Caco-2 (cell line): ENCODE measurements at regions of chr6 and their contacts with region 1.

Region 1: GRCh38 chr6:169789982-169790927 is 38.8 kb downstream of the ERMARD start:
- DNase-seq: peak; percentile 85 to 88
- H3K4me3 ChIP-seq: peak overlapping the region; percentile 53
- H3K4me3 Mint-ChIP-seq: peak overlapping the region; percentile 87
- H3K27ac Mint-ChIP-seq: peak overlapping the region; percentile 82
- H3K4me1 ChIP-seq: peaks cover 24% of the 10 kb centered on the region
- H3K4me1 Mint-ChIP-seq: peaks cover 49% of the 10 kb centered on the region
- H3K27me3 ChIP-seq: no peaks in the 10 kb centered on the region
- H3K27me3 Mint-ChIP-seq: no peaks in the 10 kb centered on the region
- CTCF ChIP-seq: peak; percentile 96 to 97

Region 2: GRCh38 chr6:169800668-169801395 is 10.6 kb after region 1 on chr6:
- CTCF ChIA-PET with region 1: interaction called, 32 read pairs
- POLR2A ChIA-PET with region 1: interaction called, 28 read pairs
- intact Hi-C with region 1: loop called (anchors 1 kb)
- DNase-seq: peak; percentile 92 to 97
- H3K4me3 ChIP-seq: no peak overlapping the region
- H3K4me3 Mint-ChIP-seq: peak overlapping the region; percentile 75
- H3K27ac Mint-ChIP-seq: peak overlapping the region; percentile 93
- H3K4me1 ChIP-seq: peaks cover 81% of the 10 kb centered on the region
- H3K4me1 Mint-ChIP-seq: peaks cover 49% of the 10 kb centered on the region
- H3K27me3 ChIP-seq: no peaks in the 10 kb centered on the region
- H3K27me3 Mint-ChIP-seq: no peaks in the 10 kb centered on the region
- CTCF ChIP-seq: no peak

Region 3: GRCh38 chr6:169831450-169832246 is 41.4 kb after region 1 on chr6:
- CTCF ChIA-PET with region 1: interaction called, 17 read pairs
- POLR2A ChIA-PET with region 1: no interaction called
- intact Hi-C with region 1: loop called (anchors 1 kb)
- DNase-seq: peak; percentile 70 to 82
- H3K4me3 ChIP-seq: no peak overlapping the region
- H3K4me3 Mint-ChIP-seq: peak overlapping the region; percentile 27
- H3K27ac Mint-ChIP-seq: peak overlapping the region; percentile 48
- H3K4me1 ChIP-seq: peaks cover 35% of the 10 kb centered on the region
- H3K4me1 Mint-ChIP-seq: peaks cover 41% of the 10 kb centered on the region
- H3K27me3 ChIP-seq: no peaks in the 10 kb centered on the region
- H3K27me3 Mint-ChIP-seq: no peaks in the 10 kb centered on the region
- CTCF ChIP-seq: peak; percentile 74 to 83

Region 4: DNA sequence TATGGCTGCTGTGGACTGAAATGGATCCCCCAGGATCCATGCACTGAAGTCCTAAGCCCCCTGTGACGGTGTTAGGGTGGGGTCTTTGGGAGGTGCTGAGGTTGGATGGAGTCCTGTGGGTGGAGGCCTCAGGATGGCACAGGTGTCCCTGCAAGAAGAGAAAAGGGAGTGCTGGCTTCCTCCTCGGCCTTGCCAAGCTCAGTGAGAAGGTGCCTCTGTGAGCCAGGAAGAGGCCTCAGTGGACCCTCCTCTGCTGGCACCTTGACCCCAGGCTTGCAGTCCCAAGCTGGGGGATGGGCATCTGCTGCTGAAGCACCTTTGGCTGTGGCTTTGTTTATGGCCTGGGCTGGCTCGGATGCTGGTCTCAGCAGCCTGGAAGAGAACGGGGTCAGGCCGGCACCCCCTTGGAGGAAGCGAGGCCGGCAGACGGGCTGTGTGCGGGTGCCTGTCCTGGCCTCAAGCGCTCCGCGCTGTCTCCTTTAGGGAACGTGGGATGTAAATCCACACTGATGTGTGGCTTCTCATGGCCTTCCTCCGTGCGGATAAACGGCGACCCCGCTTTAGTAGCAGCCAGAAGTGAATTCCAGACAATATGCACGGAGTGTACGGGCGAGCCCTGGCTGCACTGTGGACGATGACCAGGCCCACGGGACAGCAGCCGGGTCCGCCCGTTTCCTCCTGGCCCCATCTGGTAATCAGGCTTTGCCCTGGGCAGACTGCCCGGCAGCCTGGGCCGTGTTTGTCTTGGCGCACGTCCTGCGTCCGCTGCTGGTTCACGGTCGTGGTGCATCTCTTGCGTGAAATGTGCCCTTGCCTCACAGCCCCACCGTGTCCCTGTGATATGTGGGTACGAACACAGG is 143.8 kb after region 1 on chr6:
- CTCF ChIA-PET with region 1: no interaction called
- POLR2A ChIA-PET with region 1: no interaction called
- intact Hi-C with region 1: loop called (anchors 5 kb)
- DNase-seq: no peak
- H3K4me3 ChIP-seq: no peak overlapping the region
- H3K4me3 Mint-ChIP-seq: no peak overlapping the region
- H3K27ac Mint-ChIP-seq: peak overlapping the region; percentile 79
- H3K4me1 ChIP-seq: peaks cover 24% of the 10 kb centered on the region
- H3K4me1 Mint-ChIP-seq: peaks cover 7% of the 10 kb centered on the region
- H3K27me3 ChIP-seq: no peaks in the 10 kb centered on the region
- H3K27me3 Mint-ChIP-seq: no peaks in the 10 kb centered on the region
- CTCF ChIP-seq: no peak

Region 5: DNA sequence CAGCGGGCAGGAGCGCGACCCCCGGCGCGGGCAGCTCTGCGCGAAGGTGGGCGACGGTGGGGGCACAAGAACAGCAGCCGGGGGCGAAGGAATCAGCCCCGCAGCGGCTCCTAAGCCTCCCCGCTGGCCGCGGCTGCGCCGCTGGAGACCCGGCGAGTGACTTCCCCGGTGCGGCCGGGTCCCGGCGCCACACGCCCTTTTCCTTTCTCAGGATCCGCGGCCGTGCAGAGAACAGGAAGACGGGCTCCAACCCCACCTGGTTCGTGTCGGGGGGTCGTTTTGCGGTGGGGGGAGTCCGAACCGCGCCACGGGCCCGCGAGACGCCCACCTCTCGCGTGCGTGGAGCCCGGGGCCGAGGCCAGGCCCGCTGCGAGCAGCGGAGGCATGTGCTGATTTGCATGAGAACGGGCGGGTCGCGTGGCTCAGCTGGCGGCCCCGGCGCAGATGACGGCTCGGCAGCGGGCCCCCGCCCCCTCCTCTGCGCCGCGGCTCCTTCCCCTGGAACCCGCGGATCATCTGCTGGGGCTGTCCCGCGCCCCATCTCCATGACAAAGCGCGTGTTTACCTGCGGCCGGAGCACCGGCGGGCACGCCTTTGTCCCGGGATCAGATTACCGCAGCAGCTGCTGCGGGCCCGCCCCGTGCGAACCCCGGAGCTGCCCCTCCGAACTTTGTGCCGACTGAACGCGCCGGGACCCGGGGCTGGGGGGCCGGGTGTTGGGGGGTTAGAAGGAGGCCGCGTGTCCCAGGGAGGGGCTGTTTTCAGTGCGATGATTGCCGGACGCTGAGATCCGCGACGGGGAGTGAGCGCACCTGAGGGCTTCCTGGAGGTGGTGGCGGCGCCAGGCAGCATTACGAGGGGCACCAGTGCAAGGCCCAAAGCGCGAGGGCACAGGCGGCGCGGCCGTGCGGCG is 505.5 kb after region 1 on chr6:
- CTCF ChIA-PET with region 1: interaction called, 9 read pairs
- POLR2A ChIA-PET with region 1: no interaction called
- intact Hi-C with region 1: loop called (anchors 1 kb)
- DNase-seq: peak in 1 of 2 experiments; percentile 53
- H3K4me3 ChIP-seq: peak overlapping the region; percentile 64
- H3K4me3 Mint-ChIP-seq: peak overlapping the region; percentile 78
- H3K27ac Mint-ChIP-seq: no peak overlapping the region
- H3K4me1 ChIP-seq: peaks cover 18% of the 10 kb centered on the region
- H3K4me1 Mint-ChIP-seq: peaks cover 11% of the 10 kb centered on the region
- H3K27me3 ChIP-seq: peaks cover 7% of the 10 kb centered on the region
- H3K27me3 Mint-ChIP-seq: peaks cover 30% of the 10 kb centered on the region
- CTCF ChIP-seq: no peak

Region 6: GRCh38 chr6:170529839-170530469 is 739.7 kb after region 1 on chr6:
- CTCF ChIA-PET with region 1: interaction called, 3 read pairs
- POLR2A ChIA-PET with region 1: no interaction called
- intact Hi-C with region 1: loop called (anchors 1 kb)
- DNase-seq: peak; percentile 69 to 74
- H3K4me3 ChIP-seq: no peak overlapping the region
- H3K4me3 Mint-ChIP-seq: no peak overlapping the region
- H3K27ac Mint-ChIP-seq: no peak overlapping the region
- H3K4me1 ChIP-seq: peaks cover 13% of the 10 kb centered on the region
- H3K4me1 Mint-ChIP-seq: peaks cover under 1% of the 10 kb centered on the region
- H3K27me3 ChIP-seq: no peaks in the 10 kb centered on the region
- H3K27me3 Mint-ChIP-seq: no peaks in the 10 kb centered on the region
- CTCF ChIP-seq: peak; percentile 77 to 91